Heart right ventricle (tissue), 16 donors: ENCODE measurements at regions of chr7 and their contacts with region 1.

Region 1: GRCh38 chr7:22726345-22727185 is 435 bp upstream of the IL6 start:
- DNase-seq: peak; percentile 23 to 42
- ATAC-seq: peak; percentile 49 to 75 (median 63)
- H3K4me3 ChIP-seq: peak overlapping the region in 9 of 10 donors; percentile 32 to 53 (median 46)
- H3K27ac ChIP-seq: peak overlapping the region; percentile 56 to 86 (median 75)
- H3K4me1 ChIP-seq: peaks cover 4 to 66% (median 44%) of the 10 kb centered on the region in 9 donors
- H3K27me3 ChIP-seq: no peaks in the 10 kb centered on the region
- CTCF ChIP-seq: peak; percentile 27 to 66 (median 55)

Region 2: GRCh38 chr7:22565315-22565811 is 161.2 kb before region 1 on chr7:
- intact Hi-C with region 1: loop called in 8 of 10 experiments (anchors 1 to 5 kb)
- DNase-seq: no peak
- ATAC-seq: peak in 6 of 8 donors; percentile 5 to 41 (median 21)
- H3K4me3 ChIP-seq: no peak overlapping the region
- H3K27ac ChIP-seq: peak overlapping the region in 8 of 10 donors; percentile 72 to 91 (median 85)
- H3K4me1 ChIP-seq: peaks cover 11 to 73% (median 57%) of the 10 kb centered on the region in 9 donors
- H3K27me3 ChIP-seq: peaks cover 0 to 12% (median 0%) of the 10 kb centered on the region in 7 donors
- CTCF ChIP-seq: no peak

Region 3: GRCh38 chr7:22586786-22587140 is 139.8 kb before region 1 on chr7:
- intact Hi-C with region 1: loop called in 3 of 10 experiments (anchors 5 kb)
- DNase-seq: no peak
- ATAC-seq: no peak
- H3K4me3 ChIP-seq: no peak overlapping the region
- H3K27ac ChIP-seq: peak overlapping the region in 4 of 10 donors; percentile 16 to 93 (median 36)
- H3K4me1 ChIP-seq: peaks cover 21 to 82% (median 70%) of the 10 kb centered on the region in 9 donors
- H3K27me3 ChIP-seq: no peaks in the 10 kb centered on the region
- CTCF ChIP-seq: peak in 8 of 9 donors; percentile 13 to 50 (median 38)

Region 4: DNA sequence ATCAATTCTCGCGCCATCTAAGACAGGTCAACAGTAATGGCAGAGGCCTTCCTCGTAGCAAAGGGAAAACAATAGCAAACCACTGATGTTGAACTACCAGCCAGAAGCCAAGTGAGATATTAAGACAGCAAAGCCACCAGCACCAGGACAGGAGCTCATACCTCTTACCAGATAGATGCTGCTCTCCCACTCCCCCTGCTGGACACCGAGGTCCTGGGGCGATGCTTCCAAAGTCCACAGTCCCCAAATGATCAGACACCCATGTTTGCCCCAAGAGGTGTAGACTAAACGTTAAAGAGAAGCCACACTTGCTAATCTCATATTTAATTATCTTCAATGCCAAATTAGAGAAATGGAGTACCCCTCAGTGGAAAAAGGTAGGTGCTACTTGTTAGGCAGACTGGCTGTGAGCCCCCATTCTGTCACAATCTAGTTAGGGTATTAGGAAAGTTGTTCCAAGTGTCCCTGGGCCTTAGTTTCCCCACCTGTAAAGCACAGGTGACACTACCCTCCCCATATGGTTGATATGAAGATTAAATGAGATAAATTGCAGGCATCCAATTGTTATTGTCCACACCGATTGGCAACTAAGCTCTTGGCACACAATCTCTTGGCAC is 56.2 kb after region 1 on chr7:
- intact Hi-C with region 1: loop called in 1 of 10 experiments (anchors 5 kb)
- DNase-seq: peak; percentile 51 to 65
- ATAC-seq: peak in 6 of 8 donors; percentile 46 to 88 (median 60)
- H3K4me3 ChIP-seq: no peak overlapping the region
- H3K27ac ChIP-seq: no peak overlapping the region
- H3K4me1 ChIP-seq: peaks cover 0 to 9% (median 0%) of the 10 kb centered on the region in 9 donors
- H3K27me3 ChIP-seq: no peaks in the 10 kb centered on the region
- CTCF ChIP-seq: peak; percentile 42 to 83 (median 74)

Region 5: DNA sequence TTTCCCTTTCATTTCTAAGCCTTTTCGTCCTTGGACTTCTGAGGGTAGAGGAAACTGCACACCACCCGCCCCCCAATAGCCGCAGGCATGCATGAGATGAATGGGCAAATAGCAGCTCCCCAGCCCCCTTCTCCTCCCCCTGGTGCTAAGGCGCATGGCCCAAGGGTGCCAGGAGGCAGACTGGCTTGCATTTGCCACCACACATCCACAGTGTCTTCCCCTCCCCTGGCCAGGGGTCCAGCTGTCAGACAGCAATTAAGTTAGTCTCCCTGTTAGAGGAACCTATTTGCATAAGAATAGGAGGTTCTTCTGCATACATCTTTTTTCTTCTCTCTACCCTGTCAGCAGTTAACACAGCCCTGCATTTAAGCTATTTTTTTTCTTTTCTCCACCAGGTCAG is 75.9 kb after region 1 on chr7:
- intact Hi-C with region 1: no loop called
- DNase-seq: no peak
- ATAC-seq: no peak
- H3K4me3 ChIP-seq: no peak overlapping the region
- H3K27ac ChIP-seq: no peak overlapping the region
- H3K4me1 ChIP-seq: no peaks in the 10 kb centered on the region
- H3K27me3 ChIP-seq: no peaks in the 10 kb centered on the region
- CTCF ChIP-seq: no peak

Region 6: DNA sequence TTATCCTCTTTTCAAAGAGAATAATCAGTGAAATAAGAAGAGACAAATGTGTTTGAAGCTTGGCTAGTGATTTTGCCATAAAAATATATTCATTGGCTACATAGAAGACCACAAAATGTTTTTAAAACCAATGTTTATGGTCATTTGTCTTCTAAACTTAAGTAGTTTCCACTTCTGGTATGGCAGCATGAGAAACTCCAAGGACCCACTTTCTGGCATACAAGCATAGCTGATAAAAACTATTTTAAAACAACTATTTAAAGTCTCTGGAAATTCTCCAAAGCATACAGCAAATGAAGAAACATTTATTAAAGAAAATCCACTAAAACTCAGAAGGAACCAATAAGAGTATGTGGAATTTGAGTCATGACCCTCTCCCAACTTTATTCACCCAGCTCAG is 185.3 kb after region 1 on chr7:
- intact Hi-C with region 1: no loop called
- DNase-seq: no peak
- ATAC-seq: no peak
- H3K4me3 ChIP-seq: no peak overlapping the region
- H3K27ac ChIP-seq: peak overlapping the region in 2 of 10 donors; percentile 41 to 51
- H3K4me1 ChIP-seq: peaks cover 0 to 44% (median 8%) of the 10 kb centered on the region in 9 donors
- H3K27me3 ChIP-seq: no peaks in the 10 kb centered on the region
- CTCF ChIP-seq: no peak

Region 7: DNA sequence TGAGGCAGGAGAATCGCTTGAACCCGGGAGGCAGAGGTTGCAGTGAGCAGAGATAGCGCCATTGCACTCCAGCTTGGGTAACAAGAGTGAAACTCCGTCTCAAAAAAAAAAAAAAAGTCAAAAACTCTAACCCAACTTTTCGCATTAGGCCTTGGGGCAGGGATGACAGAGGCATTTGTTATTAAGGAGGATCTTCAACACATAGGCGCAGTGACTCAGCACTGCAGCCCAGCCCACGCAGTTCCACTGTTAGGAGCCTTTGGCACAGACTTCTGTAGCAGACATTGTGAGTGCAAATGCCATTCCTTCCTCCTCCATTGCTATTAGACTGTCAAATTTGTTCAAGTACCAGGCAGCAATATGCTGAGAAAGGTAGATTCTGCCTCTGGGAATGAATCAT is 335.9 kb after region 1 on chr7:
- intact Hi-C with region 1: loop called in 4 of 10 experiments (anchors 5 to 10 kb)
- DNase-seq: no peak
- ATAC-seq: peak in 1 of 8 donors; percentile 41
- H3K4me3 ChIP-seq: no peak overlapping the region
- H3K27ac ChIP-seq: no peak overlapping the region
- H3K4me1 ChIP-seq: peaks cover 0 to 18% (median 0%) of the 10 kb centered on the region in 9 donors
- H3K27me3 ChIP-seq: no peaks in the 10 kb centered on the region
- CTCF ChIP-seq: no peak

Region 8: DNA sequence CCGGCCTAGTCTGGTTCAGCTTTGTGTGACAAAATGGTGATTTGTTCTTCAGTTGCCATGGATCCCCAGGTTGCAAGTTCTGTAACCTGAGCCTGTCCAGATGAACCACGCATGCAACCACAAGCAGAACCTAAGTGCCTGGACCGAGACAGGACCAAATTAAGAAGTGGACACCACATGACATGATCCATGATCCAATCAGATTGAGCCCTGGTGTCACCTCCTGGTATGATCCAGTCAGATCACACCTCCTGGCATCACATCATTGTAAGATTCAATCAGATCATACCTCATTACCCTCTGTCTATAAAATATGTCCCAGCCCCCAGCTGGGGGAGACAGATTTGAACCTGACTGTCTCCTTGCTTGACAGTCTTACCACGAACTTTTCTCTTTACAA is 642.5 kb after region 1 on chr7:
- intact Hi-C with region 1: no loop called
- DNase-seq: no peak
- ATAC-seq: no peak
- H3K4me3 ChIP-seq: no peak overlapping the region
- H3K27ac ChIP-seq: no peak overlapping the region
- H3K4me1 ChIP-seq: no peaks in the 10 kb centered on the region
- H3K27me3 ChIP-seq: peaks cover 0 to 6% (median 0%) of the 10 kb centered on the region in 7 donors
- CTCF ChIP-seq: no peak